Activated CD4-positive, alpha-beta T cell treated with anti-CD3 and anti-CD28 coated beads, Interleukin-2, amount 10 ng/mL, durations not matched to agents 24 days and 14 days (primary cell): ENCODE measurements at regions of chrX and their contacts with region 1.

Region 1: DNA sequence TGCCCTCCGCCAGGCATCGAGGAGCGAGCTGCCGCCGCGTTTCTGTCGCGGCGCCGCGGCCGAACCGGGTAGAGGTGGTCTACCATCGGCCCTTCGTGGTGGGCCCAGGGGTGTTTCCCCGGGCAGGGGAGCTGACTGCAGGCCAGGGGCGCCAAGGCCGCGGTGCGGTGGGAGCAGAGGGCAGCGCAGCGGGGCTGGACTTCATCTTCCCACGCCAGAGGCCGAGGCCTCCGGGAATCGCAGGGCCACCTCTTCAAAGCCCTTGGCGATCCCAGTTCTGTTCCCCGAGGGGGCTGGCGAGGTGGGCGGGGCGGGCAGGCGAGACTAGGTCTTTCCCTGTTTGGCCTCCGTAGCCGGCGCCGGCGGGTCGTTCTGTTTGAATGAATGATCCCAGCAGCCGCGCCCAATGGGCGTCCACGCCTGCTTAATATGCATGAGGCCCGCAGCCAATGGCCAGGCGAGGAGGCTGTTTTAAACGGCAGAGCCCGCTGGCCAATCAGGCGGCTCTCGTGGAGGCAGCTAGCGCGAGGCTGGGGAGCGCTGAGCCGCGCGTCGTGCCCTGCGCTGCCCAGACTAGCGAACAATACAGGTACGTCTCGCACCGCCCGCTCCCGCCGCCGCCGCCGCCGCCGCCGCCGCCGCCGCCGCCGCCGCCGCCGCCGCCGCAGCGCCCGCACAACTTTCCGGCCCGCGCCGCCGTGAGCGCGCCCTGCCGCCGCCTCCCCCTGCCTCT is at the start of gene HMGB3:
- DNase-seq: peak; percentile 94
- H3K4me3 Mint-ChIP-seq: peak within 1 kb of the TSS; percentile 66
- H3K27ac Mint-ChIP-seq: peak within 1 kb of the TSS; percentile 25
- H3K4me1 Mint-ChIP-seq: peaks cover 4% of the 10 kb centered on the region
- H3K27me3 Mint-ChIP-seq: peaks cover 4% of the 10 kb centered on the region
- total RNA-seq, gene HMGB3: 32.6 and 32.8 TPM in 2 replicates

Region 2: GRCh38 chrX:150772150-150772970 is 210.6 kb before region 1 on chrX:
- intact Hi-C with region 1: loop called (anchors 10 kb)
- DNase-seq: peak; percentile 92
- H3K4me3 Mint-ChIP-seq: no peak overlapping the region
- H3K27ac Mint-ChIP-seq: no peak overlapping the region
- H3K4me1 Mint-ChIP-seq: peaks cover 2% of the 10 kb centered on the region
- H3K27me3 Mint-ChIP-seq: no peaks in the 10 kb centered on the region

Region 3: GRCh38 chrX:150898343-150899190 is 84.4 kb before region 1 on chrX and contains the start of gene CD99L2:
- intact Hi-C with region 1: loop called (anchors 1 kb)
- DNase-seq: peak; percentile 96
- H3K4me3 Mint-ChIP-seq: peak within 1 kb of the TSS; percentile 91
- H3K27ac Mint-ChIP-seq: peak within 1 kb of the TSS; percentile 69
- H3K4me1 Mint-ChIP-seq: peaks cover 5% of the 10 kb centered on the region
- H3K27me3 Mint-ChIP-seq: peaks cover 13% of the 10 kb centered on the region
- total RNA-seq, gene CD99L2: 8.1 and 10.9 TPM in 2 replicates

Region 4: GRCh38 chrX:151004082-151004481 is 21.1 kb after region 1 on chrX:
- intact Hi-C with region 1: no loop called
- DNase-seq: no peak
- H3K4me3 Mint-ChIP-seq: no peak overlapping the region
- H3K27ac Mint-ChIP-seq: no peak overlapping the region
- H3K4me1 Mint-ChIP-seq: no peaks in the 10 kb centered on the region
- H3K27me3 Mint-ChIP-seq: no peaks in the 10 kb centered on the region

Region 5: DNA sequence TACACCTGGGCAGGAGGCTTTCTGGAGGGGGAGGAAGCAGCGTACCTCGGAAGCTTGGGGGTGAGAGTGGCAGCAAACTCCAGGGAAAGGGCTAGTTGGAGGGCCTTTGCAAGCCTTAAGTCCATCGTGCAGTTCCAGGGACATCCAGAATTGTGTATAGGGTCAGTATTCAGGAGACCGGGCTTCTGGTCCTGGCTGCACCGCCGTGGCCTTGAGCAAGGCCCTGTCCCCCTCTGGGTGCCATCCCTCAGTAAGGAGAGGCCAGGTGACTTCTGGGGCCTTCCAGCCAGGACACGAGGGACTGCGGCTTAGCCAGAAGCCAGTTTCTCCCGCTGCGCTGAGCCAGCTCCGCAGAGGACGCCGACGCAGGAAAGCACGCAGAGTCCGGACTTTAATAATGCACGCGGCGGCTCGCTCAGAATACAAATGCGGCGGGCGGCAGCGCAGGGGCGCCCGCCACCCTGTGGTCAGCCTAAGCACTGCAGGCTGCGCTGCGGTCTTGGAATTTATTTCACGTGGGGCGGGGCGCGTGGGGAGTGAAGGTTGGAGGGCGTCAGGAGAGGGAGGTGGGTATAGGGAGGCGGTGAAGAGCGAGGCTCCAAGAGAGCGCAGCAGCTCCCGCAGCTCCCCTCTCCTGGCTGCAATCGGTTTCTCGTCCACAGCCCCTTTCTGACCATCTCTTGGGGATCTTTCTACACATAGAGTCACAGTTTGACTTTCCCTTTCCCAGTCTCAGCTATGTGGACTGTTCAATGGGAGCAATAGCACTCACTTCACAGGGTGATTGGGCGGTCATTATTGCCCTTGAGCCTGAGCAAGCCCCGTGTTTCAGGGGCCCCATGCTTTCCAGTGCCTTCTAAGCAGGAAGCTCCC is 99.4 kb after region 1 on chrX:
- intact Hi-C with region 1: loop called (anchors 2 kb)
- DNase-seq: peak; percentile 86
- H3K4me3 Mint-ChIP-seq: no peak overlapping the region
- H3K27ac Mint-ChIP-seq: no peak overlapping the region
- H3K4me1 Mint-ChIP-seq: peaks cover 1% of the 10 kb centered on the region
- H3K27me3 Mint-ChIP-seq: peaks cover 22% of the 10 kb centered on the region

Region 6: DNA sequence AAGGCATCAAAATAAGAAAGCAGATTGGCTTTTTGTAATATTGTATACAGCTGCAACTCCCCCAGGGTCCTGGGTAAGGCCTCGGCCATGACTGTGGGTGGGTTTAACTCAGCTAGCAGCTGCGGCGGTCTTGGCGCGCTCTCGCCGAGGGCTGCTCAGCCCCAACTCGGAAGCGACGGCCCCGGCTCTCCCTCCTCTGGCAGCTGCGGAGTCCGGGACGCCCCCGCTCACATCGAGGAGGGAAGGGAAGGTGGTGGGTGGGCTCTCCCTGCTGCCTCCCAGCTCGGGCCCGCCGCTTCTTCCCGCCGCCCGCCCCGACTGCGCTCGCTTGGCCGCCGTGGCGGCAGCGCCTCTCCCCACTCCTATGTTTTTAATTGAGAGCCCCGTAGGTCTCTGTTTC is 244.7 kb after region 1 on chrX:
- intact Hi-C with region 1: no loop called
- DNase-seq: no peak
- H3K4me3 Mint-ChIP-seq: no peak overlapping the region
- H3K27ac Mint-ChIP-seq: no peak overlapping the region
- H3K4me1 Mint-ChIP-seq: no peaks in the 10 kb centered on the region
- H3K27me3 Mint-ChIP-seq: peaks cover 10% of the 10 kb centered on the region